ENCODE measurements at regions of chr10 and their contacts with region 1.

Region 1: DNA sequence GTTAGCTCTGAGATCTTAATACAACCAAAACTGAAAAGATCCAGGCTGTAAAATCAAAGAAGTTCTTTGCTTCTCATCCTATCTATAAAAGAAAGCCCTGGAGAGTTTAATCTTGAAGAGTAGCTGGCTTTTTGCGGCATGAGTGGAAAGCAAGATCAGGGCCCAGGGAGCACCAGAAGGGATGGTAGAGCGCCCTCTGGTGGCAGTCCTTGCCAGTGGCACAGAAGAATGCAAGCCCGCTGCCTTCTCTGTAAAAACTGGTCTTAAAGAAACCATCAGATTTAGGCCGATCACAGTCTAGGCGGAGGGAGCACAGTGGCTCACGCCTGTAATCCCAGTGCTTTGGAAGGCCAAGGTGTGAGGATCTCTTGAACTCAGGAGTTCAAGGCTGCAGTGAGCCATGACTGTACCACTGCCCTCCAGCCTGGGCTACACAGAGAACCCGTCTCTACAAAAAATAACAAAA is 35.6 kb downstream of the CPN1 start:
- DNase-seq: peak; percentile 93
- ATAC-seq: peak; percentile 71

Region 2: GRCh38 chr10:99845837-99846382 is 200.1 kb before region 1 on chr10:
- intact Hi-C with region 1: loop called (anchors 5 kb)
- DNase-seq: peak; percentile 45
- ATAC-seq: peak; percentile 96

Region 3: GRCh38 chr10:99976886-99977665 is 69.0 kb before region 1 on chr10:
- intact Hi-C with region 1: loop called (anchors 10 kb)
- DNase-seq: no peak
- ATAC-seq: peak; percentile 81

Region 4: DNA sequence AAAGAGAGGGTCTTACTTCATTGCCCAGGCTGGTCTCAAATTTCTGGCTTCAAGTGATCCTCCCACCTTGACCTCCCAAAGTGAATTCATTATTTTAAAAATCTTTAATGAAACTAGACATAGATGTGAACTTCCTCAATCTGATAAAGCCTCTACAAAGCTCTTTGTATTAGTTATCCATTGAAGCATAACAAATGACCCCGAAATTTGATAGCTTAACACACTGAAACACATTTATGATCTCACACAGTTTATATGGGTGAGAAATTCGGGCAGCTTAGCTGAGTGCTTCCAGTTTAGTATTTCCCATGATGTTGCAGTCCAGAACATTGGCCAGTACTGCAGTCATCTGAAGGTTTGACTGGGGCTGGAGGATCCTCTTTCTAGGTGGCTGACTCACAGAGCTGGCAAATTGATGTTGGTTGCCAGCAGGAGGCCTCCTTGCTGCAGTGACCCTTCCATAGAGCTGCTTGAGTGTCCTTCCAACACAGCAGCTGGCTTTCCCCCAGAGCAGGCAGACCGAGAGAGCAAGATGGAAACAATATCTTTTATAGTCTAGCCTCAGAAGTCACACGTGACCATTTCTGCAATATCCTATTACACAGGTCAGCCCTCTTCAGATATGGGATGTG is 400.2 kb after region 1 on chr10:
- intact Hi-C with region 1: no loop called
- DNase-seq: no peak
- ATAC-seq: no peak

Measured in left ventricle myocardium superior (tissue), 1 donor.